Esophagus squamous epithelium (tissue), 5 donors: ENCODE measurements at regions of chr7 and their contacts with region 1.

Region 1: GRCh38 chr7:41045556-41046123 is 657.2 kb downstream of the INHBA start:
- DNase-seq: no peak
- H3K4me3 ChIP-seq: no peak overlapping the region
- H3K27ac ChIP-seq: no peak overlapping the region
- H3K4me1 ChIP-seq: peaks cover 0 to 7% (median 4%) of the 10 kb centered on the region in 3 donors
- H3K27me3 ChIP-seq: no peaks in the 10 kb centered on the region
- CTCF ChIP-seq: peak in 3 of 6 experiments; percentile 51 to 74 (median 59)
- POLR2A ChIP-seq: no peak

Region 2: GRCh38 chr7:40827217-40828085 is 218.2 kb before region 1 on chr7:
- intact Hi-C with region 1: no loop called
- DNase-seq: no peak
- H3K4me3 ChIP-seq: no peak overlapping the region
- H3K27ac ChIP-seq: peak overlapping the region; percentile 40 to 77 (median 54)
- H3K4me1 ChIP-seq: peaks cover 0 to 35% (median 20%) of the 10 kb centered on the region in 3 donors
- H3K27me3 ChIP-seq: no peaks in the 10 kb centered on the region
- CTCF ChIP-seq: no peak
- POLR2A ChIP-seq: no peak

Region 3: GRCh38 chr7:41599760-41600159 is 554.1 kb after region 1 on chr7:
- intact Hi-C with region 1: no loop called
- DNase-seq: no peak
- H3K4me3 ChIP-seq: no peak overlapping the region
- H3K27ac ChIP-seq: no peak overlapping the region
- H3K4me1 ChIP-seq: no peaks in the 10 kb centered on the region
- H3K27me3 ChIP-seq: no peaks in the 10 kb centered on the region
- CTCF ChIP-seq: no peak
- POLR2A ChIP-seq: no peak

Region 4: GRCh38 chr7:41696314-41696916 is 650.8 kb after region 1 on chr7:
- intact Hi-C with region 1: loop called (anchors 10 kb)
- DNase-seq: no peak
- H3K4me3 ChIP-seq: peak overlapping the region; percentile 10 to 53 (median 26)
- H3K27ac ChIP-seq: peak overlapping the region in 3 of 4 donors; percentile 61 to 76 (median 72)
- H3K4me1 ChIP-seq: peaks cover 3 to 49% (median 21%) of the 10 kb centered on the region in 3 donors
- H3K27me3 ChIP-seq: peaks cover 0 to 48% (median 0%) of the 10 kb centered on the region in 4 donors
- CTCF ChIP-seq: peak; percentile 32 to 70 (median 56)
- POLR2A ChIP-seq: no peak